ENCODE measurements at regions of chr21 and their contacts with region 1.

Region 1: GRCh38 chr21:25561668-25562641 is 45.3 kb downstream of the MRPL39 start:
- DNase-seq: peak; percentile 73
- ATAC-seq: peak; percentile 70
- H3K4me3 Mint-ChIP-seq: peak overlapping the region; percentile 92
- H3K27ac Mint-ChIP-seq: peak overlapping the region; percentile 95
- H3K4me1 Mint-ChIP-seq: peaks cover 60% of the 10 kb centered on the region
- H3K27me3 Mint-ChIP-seq: no peaks in the 10 kb centered on the region
- CTCF ChIP-seq: no peak

Region 2: DNA sequence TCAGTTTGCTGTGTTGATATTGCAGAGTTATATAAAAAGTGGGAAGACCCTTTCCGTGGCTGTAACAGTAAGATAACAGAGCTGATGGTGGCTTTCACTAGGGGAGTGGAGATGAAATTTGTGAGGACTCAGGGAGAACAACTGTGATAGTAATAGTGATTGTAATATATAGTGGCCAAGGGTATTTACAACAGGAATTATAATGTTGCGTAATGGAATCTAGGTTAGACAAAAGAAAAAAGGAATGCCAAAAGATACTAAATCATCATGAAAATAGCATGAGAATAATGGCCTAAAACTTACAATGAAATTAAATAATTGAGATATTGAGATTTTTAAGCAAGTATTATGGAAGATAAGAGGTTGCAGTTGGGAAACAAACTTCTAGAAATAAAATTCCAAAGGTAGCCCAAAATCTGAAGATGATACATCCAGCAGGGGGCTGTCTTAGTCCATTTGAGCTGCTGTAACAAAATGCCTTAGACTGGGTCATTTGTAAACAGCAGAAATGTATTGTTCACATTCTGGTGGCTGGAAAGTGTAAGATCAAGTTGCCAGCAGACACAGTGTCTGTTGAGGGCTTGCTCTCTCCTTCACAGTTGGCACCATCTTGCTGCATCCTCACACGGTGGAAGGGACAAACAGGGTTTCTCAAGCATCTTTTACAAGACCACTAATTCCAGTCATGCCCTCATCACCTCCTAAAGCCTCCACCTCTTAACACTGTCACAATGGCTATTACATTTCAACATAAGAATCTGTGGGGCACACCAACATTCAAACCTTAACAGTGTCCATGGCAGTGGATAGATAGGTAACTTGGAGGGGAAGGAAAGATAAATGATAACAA is 665.8 kb before region 1 on chr21:
- CTCF ChIA-PET with region 1: no interaction called
- POLR2A ChIA-PET with region 1: no interaction called
- intact Hi-C with region 1: loop called (anchors 5 kb)
- DNase-seq: no peak
- ATAC-seq: peak; percentile 69
- H3K4me3 Mint-ChIP-seq: no peak overlapping the region
- H3K27ac Mint-ChIP-seq: peak overlapping the region; percentile 4
- H3K4me1 Mint-ChIP-seq: peaks cover 21% of the 10 kb centered on the region
- H3K27me3 Mint-ChIP-seq: no peaks in the 10 kb centered on the region
- CTCF ChIP-seq: no peak

Region 3: GRCh38 chr21:25396135-25396711 is 165.7 kb before region 1 on chr21:
- CTCF ChIA-PET with region 1: no interaction called
- POLR2A ChIA-PET with region 1: interaction called, 11 read pairs
- intact Hi-C with region 1: loop called (anchors 1 kb)
- DNase-seq: peak; percentile 33
- ATAC-seq: peak; percentile 88
- H3K4me3 Mint-ChIP-seq: peak overlapping the region; percentile 81
- H3K27ac Mint-ChIP-seq: peak overlapping the region; percentile 84
- H3K4me1 Mint-ChIP-seq: peaks cover 31% of the 10 kb centered on the region
- H3K27me3 Mint-ChIP-seq: no peaks in the 10 kb centered on the region
- CTCF ChIP-seq: no peak

Region 4: GRCh38 chr21:25412100-25412499 is 149.9 kb before region 1 on chr21:
- CTCF ChIA-PET with region 1: no interaction called
- POLR2A ChIA-PET with region 1: no interaction called
- intact Hi-C with region 1: no loop called
- DNase-seq: no peak
- ATAC-seq: no peak
- H3K4me3 Mint-ChIP-seq: no peak overlapping the region
- H3K27ac Mint-ChIP-seq: no peak overlapping the region
- H3K4me1 Mint-ChIP-seq: peaks cover 42% of the 10 kb centered on the region
- H3K27me3 Mint-ChIP-seq: no peaks in the 10 kb centered on the region
- CTCF ChIP-seq: no peak

Region 5: GRCh38 chr21:25428537-25428936 is 133.4 kb before region 1 on chr21:
- CTCF ChIA-PET with region 1: interaction called, 18 read pairs
- POLR2A ChIA-PET with region 1: interaction called, 157 read pairs
- intact Hi-C with region 1: loop called (anchors 1 kb)
- DNase-seq: no peak
- ATAC-seq: peak; percentile 15
- H3K4me3 Mint-ChIP-seq: peak overlapping the region; percentile 35
- H3K27ac Mint-ChIP-seq: peak overlapping the region; percentile 65
- H3K4me1 Mint-ChIP-seq: peaks cover 53% of the 10 kb centered on the region
- H3K27me3 Mint-ChIP-seq: no peaks in the 10 kb centered on the region
- CTCF ChIP-seq: no peak

Region 6: DNA sequence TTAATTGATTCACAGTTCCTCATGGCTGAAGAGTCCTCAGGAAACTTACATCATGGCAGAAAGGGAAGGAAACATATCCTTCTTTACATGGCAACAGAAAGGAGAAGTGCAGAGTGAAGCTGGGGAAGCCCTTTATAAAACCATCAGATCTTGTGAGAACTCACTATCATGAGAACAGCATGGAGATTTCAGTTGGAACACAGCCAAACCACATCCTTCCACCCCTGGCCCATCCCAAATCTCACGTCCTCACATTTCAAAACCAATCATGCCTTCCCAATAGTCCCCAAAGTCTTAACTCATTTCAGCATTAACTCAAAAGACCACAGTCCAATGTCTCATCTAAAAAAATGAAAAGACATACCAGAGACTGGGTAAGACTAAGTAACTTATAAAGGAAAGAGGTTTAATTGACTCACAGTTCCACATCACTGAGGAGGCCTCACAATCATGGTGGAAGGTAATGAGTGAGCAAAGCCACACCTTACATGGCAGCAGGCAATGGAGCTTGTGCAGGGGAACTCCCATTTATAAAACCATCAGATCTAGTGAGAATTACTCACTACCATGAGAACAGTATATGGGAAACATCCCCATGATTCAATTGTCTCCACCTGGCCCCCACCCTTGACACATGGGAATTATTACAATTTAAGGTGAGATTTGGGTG is 59.8 kb before region 1 on chr21:
- CTCF ChIA-PET with region 1: no interaction called
- POLR2A ChIA-PET with region 1: interaction called, 15 read pairs
- intact Hi-C with region 1: loop called (anchors 1 kb)
- DNase-seq: no peak
- ATAC-seq: peak; percentile 83
- H3K4me3 Mint-ChIP-seq: peak overlapping the region; percentile 32
- H3K27ac Mint-ChIP-seq: peak overlapping the region; percentile 82
- H3K4me1 Mint-ChIP-seq: peaks cover 54% of the 10 kb centered on the region
- H3K27me3 Mint-ChIP-seq: no peaks in the 10 kb centered on the region
- CTCF ChIP-seq: no peak

Region 7: DNA sequence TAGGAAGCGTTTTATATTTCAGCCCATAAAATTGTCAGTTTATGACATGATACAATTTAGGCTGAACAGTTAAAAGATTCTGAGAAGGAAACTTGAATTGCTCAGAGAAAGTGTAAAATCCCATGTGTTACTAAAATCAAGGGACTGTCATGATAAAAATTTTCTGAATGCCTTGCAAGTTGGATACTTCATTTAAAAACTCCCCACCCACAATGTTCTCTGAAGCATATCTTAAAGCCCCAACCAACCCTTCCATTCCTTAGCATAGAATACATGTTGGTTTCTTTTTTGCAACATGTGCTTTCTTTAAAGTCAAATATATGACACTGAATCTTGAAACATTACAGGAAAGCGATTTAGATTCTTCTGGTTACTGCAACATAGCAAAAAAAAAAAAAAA is 52.1 kb before region 1 on chr21:
- CTCF ChIA-PET with region 1: no interaction called
- POLR2A ChIA-PET with region 1: interaction called, 9 read pairs
- intact Hi-C with region 1: loop called (anchors 2 kb)
- DNase-seq: no peak
- ATAC-seq: peak; percentile 77
- H3K4me3 Mint-ChIP-seq: peak overlapping the region; percentile 55
- H3K27ac Mint-ChIP-seq: peak overlapping the region; percentile 63
- H3K4me1 Mint-ChIP-seq: peaks cover 45% of the 10 kb centered on the region
- H3K27me3 Mint-ChIP-seq: no peaks in the 10 kb centered on the region
- CTCF ChIP-seq: no peak

Region 8: DNA sequence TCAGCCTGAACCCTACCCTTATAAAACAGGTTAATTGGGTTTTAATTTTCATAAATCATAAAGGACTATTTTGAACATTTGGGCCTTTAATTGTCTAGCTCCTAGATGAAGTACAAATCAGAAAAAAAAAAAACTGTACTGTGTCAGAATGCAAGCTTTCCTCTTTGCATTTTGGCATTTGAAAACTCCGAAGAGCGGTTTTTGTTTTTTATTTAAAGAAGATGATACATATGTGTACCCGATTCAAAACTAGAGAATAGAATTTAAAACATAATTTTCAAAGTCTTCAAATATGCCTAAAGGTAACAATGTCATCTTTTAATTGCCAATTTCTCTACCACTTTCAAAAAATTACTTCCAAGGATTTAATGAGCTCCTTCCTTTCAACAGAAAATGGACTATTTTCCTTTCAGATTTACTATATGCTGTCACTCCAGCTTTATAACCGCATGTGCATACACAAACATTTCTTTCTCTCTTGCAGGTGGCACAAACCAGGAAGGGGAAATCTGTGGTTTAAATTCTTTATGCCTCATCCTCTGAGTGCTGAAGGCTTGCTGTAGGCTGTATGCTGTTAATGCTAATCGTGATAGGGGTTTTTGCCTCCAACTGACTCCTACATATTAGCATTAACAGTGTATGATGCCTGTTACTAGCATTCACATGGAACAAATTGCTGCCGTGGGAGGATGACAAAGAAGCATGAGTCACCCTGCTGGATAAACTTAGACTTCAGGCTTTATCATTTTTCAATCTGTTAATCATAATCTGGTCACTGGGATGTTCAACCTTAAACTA is 11.7 kb after region 1 on chr21:
- CTCF ChIA-PET with region 1: interaction called, 13 read pairs
- POLR2A ChIA-PET with region 1: interaction called, 88 read pairs
- intact Hi-C with region 1: loop called (anchors 1 kb)
- DNase-seq: no peak
- ATAC-seq: peak; percentile 53
- H3K4me3 Mint-ChIP-seq: peak overlapping the region; percentile 75
- H3K27ac Mint-ChIP-seq: peak overlapping the region; percentile 90
- H3K4me1 Mint-ChIP-seq: peaks cover 90% of the 10 kb centered on the region
- H3K27me3 Mint-ChIP-seq: no peaks in the 10 kb centered on the region
- CTCF ChIP-seq: no peak